CD4-positive, alpha-beta T cell (primary cell): ENCODE measurements at regions of chr7 and their contacts with region 1.

Region 1: DNA sequence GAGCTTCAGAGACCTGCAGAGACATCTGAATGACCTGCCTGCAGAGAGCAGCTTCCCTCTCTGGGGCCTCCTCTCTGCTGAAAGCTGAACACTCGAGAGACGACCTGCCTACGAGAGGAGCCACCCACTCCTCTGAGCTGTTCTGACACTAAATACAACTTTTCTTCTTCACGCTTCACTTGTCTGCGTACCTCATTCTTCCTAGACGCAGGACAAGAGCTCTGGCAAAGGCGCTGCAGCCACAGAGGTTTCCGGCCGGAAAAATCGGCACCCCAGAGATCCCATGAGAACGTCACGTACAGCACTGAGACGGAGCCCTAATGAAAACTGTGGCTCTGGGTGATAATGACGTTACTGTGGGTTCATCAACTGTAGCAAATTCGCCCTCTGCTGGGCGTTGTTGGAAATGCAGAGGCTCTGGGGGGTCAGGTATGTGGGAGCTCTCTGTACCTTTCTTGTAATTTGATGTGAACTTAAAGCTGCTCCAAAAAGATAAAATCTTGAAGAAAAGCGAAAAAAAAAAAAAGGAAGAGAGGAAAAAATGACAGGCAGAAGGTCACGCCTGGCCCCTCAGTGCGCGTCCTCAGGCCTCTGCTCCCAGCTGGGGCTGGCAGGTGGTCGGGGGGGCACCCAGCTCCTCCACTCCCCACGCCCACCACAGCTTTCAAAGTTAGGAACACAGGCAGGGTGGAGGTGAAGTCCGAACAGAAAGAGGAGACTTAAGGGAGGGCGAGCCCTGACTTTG is 120.7 kb downstream of the DYNC2I1 start:
- DNase-seq: peak; percentile 83 to 96 (median 92)
- ATAC-seq: peak; percentile 85
- H3K4me3 ChIP-seq: peak overlapping the region; percentile 55
- H3K4me3 Mint-ChIP-seq: peak overlapping the region; percentile 93
- H3K27ac ChIP-seq: no peak overlapping the region
- H3K27ac Mint-ChIP-seq: peak overlapping the region; percentile 77
- H3K4me1 ChIP-seq: peaks cover 26% of the 10 kb centered on the region
- H3K4me1 Mint-ChIP-seq: peaks cover 22% of the 10 kb centered on the region
- H3K27me3 ChIP-seq: no peaks in the 10 kb centered on the region
- H3K27me3 Mint-ChIP-seq: no peaks in the 10 kb centered on the region
- CTCF ChIP-seq: peak; percentile 89

Region 2: GRCh38 chr7:158495786-158496185 is 481.2 kb before region 1 on chr7:
- CTCF ChIA-PET with region 1: no interaction called
- POLR2A ChIA-PET with region 1: no interaction called
- intact Hi-C with region 1: loop called (anchors 5 to 10 kb)
- DNase-seq: no peak
- ATAC-seq: no peak
- H3K4me3 ChIP-seq: no peak overlapping the region
- H3K4me3 Mint-ChIP-seq: no peak overlapping the region
- H3K27ac ChIP-seq: no peak overlapping the region
- H3K27ac Mint-ChIP-seq: no peak overlapping the region
- H3K4me1 ChIP-seq: no peaks in the 10 kb centered on the region
- H3K4me1 Mint-ChIP-seq: no peaks in the 10 kb centered on the region
- H3K27me3 ChIP-seq: peaks cover 4 to 5% of the 10 kb centered on the region in 2 experiments
- H3K27me3 Mint-ChIP-seq: peaks cover 23% of the 10 kb centered on the region
- CTCF ChIP-seq: no peak

Region 3: GRCh38 chr7:158760936-158761335 is 216.1 kb before region 1 on chr7:
- CTCF ChIA-PET with region 1: no interaction called
- POLR2A ChIA-PET with region 1: no interaction called
- intact Hi-C with region 1: loop called in 1 of 2 experiments (anchors 2 kb)
- DNase-seq: peak in 7 of 14 experiments; percentile 10 to 59 (median 46)
- ATAC-seq: peak; percentile 63
- H3K4me3 ChIP-seq: no peak overlapping the region
- H3K4me3 Mint-ChIP-seq: no peak overlapping the region
- H3K27ac ChIP-seq: no peak overlapping the region
- H3K27ac Mint-ChIP-seq: peak overlapping the region; percentile 48
- H3K4me1 ChIP-seq: no peaks in the 10 kb centered on the region
- H3K4me1 Mint-ChIP-seq: peaks cover 9% of the 10 kb centered on the region
- H3K27me3 ChIP-seq: no peaks in the 10 kb centered on the region
- H3K27me3 Mint-ChIP-seq: no peaks in the 10 kb centered on the region
- CTCF ChIP-seq: peak; percentile 57

Region 4: DNA sequence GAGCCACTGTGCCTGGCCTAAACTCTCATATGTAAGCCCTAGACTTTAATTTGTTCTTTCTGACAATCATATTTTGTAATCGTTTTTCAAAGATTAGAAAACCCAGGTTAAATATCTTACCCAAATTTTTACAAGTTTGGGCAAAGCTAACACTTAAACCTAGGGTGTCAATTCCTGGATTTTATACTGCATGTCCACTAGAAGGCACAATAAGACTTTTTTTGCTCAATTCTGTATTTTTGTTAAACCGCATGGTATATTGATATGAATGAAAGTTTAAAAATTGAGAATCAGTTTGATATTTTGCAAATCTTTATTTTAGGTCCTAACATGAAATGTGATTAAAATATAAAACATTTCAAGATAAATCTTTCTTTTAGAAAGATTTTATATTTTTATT is 91.4 kb before region 1 on chr7:
- CTCF ChIA-PET with region 1: interaction called, 6 read pairs
- POLR2A ChIA-PET with region 1: no interaction called
- intact Hi-C with region 1: loop called (anchors 2 to 5 kb)
- DNase-seq: peak in 2 of 14 experiments; percentile 10 to 13
- ATAC-seq: no peak
- H3K4me3 ChIP-seq: no peak overlapping the region
- H3K4me3 Mint-ChIP-seq: no peak overlapping the region
- H3K27ac ChIP-seq: no peak overlapping the region
- H3K27ac Mint-ChIP-seq: no peak overlapping the region
- H3K4me1 ChIP-seq: no peaks in the 10 kb centered on the region
- H3K4me1 Mint-ChIP-seq: no peaks in the 10 kb centered on the region
- H3K27me3 ChIP-seq: no peaks in the 10 kb centered on the region
- H3K27me3 Mint-ChIP-seq: no peaks in the 10 kb centered on the region
- CTCF ChIP-seq: peak; percentile 37

Region 5: DNA sequence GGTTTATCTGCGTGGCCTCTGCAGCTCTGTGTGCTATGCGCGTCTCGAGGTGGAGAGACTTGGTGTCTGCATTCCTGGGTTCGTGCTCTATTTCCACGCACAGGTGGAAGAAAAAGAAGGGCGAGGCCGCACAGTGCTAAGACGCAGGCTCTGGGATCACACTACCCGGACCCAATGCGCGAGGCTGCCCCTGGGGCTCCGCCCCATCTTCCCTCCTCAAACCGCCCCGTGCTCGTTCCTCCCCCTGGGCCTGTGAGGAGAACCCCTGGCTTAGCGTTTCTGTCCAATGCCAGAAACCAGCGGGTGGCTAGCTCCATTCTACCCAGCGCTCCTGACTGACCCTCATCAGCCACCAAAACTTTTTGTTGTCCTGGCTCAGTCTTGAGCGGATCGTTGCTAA is 22.5 kb after region 1 on chr7:
- CTCF ChIA-PET with region 1: no interaction called
- POLR2A ChIA-PET with region 1: no interaction called
- intact Hi-C with region 1: no loop called
- DNase-seq: no peak
- ATAC-seq: no peak
- H3K4me3 ChIP-seq: no peak overlapping the region
- H3K4me3 Mint-ChIP-seq: no peak overlapping the region
- H3K27ac ChIP-seq: no peak overlapping the region
- H3K27ac Mint-ChIP-seq: no peak overlapping the region
- H3K4me1 ChIP-seq: no peaks in the 10 kb centered on the region
- H3K4me1 Mint-ChIP-seq: no peaks in the 10 kb centered on the region
- H3K27me3 ChIP-seq: no peaks in the 10 kb centered on the region
- H3K27me3 Mint-ChIP-seq: peaks cover 25% of the 10 kb centered on the region
- CTCF ChIP-seq: no peak

Region 6: GRCh38 chr7:159036916-159037605 is 60.0 kb after region 1 on chr7:
- CTCF ChIA-PET with region 1: no interaction called
- POLR2A ChIA-PET with region 1: no interaction called
- intact Hi-C with region 1: no loop called
- DNase-seq: no peak
- ATAC-seq: no peak
- H3K4me3 ChIP-seq: no peak overlapping the region
- H3K4me3 Mint-ChIP-seq: no peak overlapping the region
- H3K27ac ChIP-seq: no peak overlapping the region
- H3K27ac Mint-ChIP-seq: no peak overlapping the region
- H3K4me1 ChIP-seq: no peaks in the 10 kb centered on the region
- H3K4me1 Mint-ChIP-seq: no peaks in the 10 kb centered on the region
- H3K27me3 ChIP-seq: peaks cover 4 to 6% of the 10 kb centered on the region in 2 experiments
- H3K27me3 Mint-ChIP-seq: no peaks in the 10 kb centered on the region
- CTCF ChIP-seq: no peak